Gastrocnemius medialis (tissue), 4 donors: ENCODE measurements at regions of chr15 and their contacts with region 1.

Region 1: DNA sequence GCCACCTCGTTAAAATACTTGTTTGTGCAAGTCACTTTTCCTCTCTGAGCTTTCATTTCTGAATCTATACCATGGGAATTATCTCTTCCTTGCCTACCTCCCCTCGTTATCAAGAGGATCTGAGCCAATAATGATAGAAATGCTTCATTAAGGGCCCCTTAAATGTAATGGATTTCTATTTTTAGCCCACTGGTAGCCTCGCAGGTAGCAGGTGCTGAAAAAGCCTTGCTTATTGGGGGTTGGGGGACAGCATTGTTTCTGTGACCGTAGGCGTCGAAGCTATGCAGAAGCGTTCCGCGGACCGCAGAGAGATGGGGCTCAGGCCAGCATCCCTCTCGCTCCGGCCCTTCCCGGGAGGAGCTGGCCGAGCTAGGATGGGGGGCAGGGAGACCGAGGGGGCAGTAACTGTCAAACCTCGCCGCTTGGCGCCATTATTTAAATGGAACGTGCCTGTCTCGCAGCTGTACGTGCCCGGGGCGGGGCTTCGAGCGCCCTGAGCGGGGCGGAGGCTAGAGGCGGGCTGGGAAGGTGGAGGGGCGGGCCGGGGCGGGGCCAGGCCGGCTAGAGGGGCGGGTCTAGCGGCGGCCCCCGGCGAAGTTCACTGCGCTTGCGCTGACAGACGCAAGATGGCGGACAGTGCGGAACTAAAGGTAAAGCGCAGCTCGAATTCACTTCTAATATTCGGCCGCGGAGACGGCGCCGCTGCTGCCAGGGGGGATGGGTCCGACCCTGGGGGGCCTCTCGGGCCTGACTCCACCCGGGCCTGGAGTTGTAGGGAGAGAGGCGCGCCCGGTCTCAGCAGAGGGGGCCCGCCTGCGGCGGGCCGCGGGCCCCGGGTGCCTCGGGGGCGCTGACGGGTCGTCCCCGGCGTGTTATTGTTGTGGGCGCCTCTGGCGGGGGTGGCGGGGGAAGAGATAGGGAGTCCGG is at the start of gene PIAS1:
- DNase-seq: peak; percentile 88 to 93
- ATAC-seq: peak; percentile 94 to 95
- H3K4me3 ChIP-seq: peak within 1 kb of the TSS; percentile 93 to 99 (median 97)
- H3K27ac ChIP-seq: peak within 1 kb of the TSS; percentile 93 to 99 (median 96)
- H3K4me1 ChIP-seq: peaks cover 31% of the 10 kb centered on the region in 2 donors
- H3K27me3 ChIP-seq: no peaks in the 10 kb centered on the region
- CTCF ChIP-seq: no peak
- POLR2A ChIP-seq: peak; percentile 94
- total RNA-seq, gene PIAS1: 16.4 to 71.9 (median 23.5) TPM

Region 2: GRCh38 chr15:68114356-68114755 is 60.4 kb after region 1 on chr15:
- in situ Hi-C with region 1: no loop called
- intact Hi-C with region 1: loop called (anchors 10 kb)
- DNase-seq: no peak
- ATAC-seq: peak; percentile 68 to 82
- H3K4me3 ChIP-seq: peak overlapping the region; percentile 8 to 57 (median 45)
- H3K27ac ChIP-seq: peak overlapping the region; percentile 42 to 71 (median 52)
- H3K4me1 ChIP-seq: peaks cover 36 to 42% of the 10 kb centered on the region in 2 donors
- H3K27me3 ChIP-seq: no peaks in the 10 kb centered on the region
- CTCF ChIP-seq: no peak
- POLR2A ChIP-seq: no peak

Region 3: DNA sequence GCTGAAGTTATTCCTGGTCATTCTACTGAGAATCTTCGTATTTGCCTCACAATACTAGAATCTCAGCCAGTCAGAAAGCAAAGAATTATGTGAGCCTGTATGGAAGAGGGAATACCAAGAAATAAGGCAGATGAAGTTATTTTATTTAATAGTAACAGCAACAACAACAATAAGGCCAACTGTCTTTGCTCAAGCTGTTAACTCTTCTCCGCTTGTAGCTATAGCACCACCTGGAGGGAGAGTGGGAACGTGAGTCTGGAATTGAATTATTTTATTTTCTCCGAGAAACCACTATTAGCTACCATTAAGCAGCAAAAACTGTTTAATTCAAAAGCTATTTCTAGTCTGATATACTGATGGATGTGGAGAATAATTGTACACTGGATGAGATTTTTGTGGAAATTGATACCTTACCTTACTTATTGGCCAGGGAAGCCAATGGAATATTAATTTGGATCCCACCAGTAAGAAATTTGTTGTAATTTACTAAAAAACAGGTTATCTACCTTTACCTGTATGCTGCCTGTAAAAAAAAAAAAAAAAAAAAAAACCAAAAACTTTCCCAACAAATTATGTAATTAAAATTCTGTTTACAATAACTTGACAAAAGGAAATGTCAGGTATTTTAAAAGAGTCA is 101.1 kb after region 1 on chr15:
- in situ Hi-C with region 1: no loop called
- intact Hi-C with region 1: loop called (anchors 2 kb)
- DNase-seq: peak in 1 of 2 donors; percentile 21
- ATAC-seq: peak; percentile 49 to 60
- H3K4me3 ChIP-seq: no peak overlapping the region
- H3K27ac ChIP-seq: no peak overlapping the region
- H3K4me1 ChIP-seq: peaks cover 0 to 10% of the 10 kb centered on the region in 2 donors
- H3K27me3 ChIP-seq: no peaks in the 10 kb centered on the region
- CTCF ChIP-seq: peak; percentile 57 to 78 (median 68)
- POLR2A ChIP-seq: no peak

Region 4: DNA sequence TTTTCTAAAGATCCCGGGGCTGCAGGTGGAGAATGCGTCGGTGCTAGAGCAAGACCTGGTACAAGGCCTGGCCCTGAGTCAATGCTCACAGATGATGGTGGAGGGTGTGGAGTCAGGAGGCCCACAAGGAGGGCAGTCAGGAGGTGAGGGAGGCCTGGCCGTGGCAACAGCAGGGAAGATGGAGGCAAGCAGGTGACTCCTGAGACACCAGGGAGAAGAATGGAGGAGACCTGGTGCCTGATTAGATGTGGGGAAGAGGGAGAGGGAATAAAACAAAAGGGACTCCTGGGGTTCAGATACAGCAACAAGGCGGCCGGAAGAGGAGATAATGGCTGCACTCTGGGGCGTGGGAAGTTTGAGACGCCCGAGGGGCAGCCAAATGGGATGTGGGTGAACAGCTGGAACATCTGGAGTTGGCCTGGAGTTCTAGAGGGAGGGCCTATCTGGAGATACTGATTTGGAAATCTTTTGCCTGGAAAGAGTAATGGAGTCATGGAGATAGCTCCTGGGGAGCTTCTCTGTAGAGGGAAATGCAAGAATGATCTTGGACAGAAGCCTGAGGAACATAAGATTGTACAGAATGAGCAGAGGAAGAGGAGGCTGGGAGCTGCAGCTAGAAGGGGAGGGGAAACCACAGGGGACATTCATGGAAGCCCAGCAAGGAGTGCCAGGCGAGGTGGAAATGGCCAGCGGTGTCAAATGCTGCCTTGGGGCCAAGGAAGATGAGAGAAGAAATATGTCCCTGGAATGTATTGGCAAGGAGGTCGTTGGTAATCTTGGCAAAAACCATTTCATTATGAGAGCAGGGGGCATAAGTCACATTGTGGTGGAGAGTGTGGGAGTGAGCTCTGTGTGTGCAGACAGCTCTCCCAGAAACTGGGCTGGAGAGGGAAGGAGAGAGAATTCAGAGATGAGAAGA is 457.4 kb after region 1 on chr15:
- in situ Hi-C with region 1: no loop called
- intact Hi-C with region 1: no loop called
- DNase-seq: no peak
- ATAC-seq: no peak
- H3K4me3 ChIP-seq: no peak overlapping the region
- H3K27ac ChIP-seq: no peak overlapping the region
- H3K4me1 ChIP-seq: no peaks in the 10 kb centered on the region
- H3K27me3 ChIP-seq: no peaks in the 10 kb centered on the region
- CTCF ChIP-seq: no peak
- POLR2A ChIP-seq: no peak